SK-N-SH (cell line): ENCODE measurements at regions of chr2 and their contacts with region 1.

Region 1: DNA sequence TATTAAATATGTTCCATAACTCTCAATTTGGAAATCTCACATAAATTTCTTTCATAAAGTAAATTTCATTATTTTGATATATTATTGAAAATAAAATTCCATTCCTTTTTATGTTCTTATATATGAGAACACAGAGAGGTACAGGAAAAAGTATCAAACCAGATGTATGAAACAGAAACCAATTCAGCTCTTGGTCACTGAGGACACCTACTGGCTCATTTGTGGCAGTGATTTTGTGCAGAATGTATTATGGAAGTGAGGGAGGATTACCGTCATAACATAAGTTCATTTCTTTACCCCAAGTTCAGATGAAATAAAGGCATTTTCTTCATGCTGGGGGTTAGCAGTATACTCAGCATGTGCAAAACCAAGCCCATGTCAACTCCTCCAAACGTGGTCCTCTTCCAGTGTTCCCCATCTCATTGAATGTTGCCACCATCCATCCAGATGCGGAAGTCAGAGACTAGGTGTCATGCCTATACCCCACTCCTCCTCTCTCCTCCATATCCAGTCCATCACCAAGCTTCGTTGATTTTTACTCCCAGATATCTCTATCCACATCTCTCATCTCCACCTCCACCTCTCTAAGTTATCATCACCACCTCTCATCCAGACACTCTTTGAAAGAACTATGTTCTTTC is 41.7 kb upstream of the MALL start:
- DNase-seq: peak; percentile 48
- H3K4me3 ChIP-seq: no peak overlapping the region
- H3K27ac ChIP-seq: peak overlapping the region in 1 of 2 experiments; percentile 75; a peak in 2 of 4 replicates
- H3K4me1 ChIP-seq: no peaks in the 10 kb centered on the region
- H3K27me3 ChIP-seq: no peaks in the 10 kb centered on the region
- CTCF ChIP-seq: peak; percentile 84
- EP300 ChIP-seq: no peak
- RAD21 ChIP-seq: peak; percentile 89

Region 2: GRCh38 chr2:110167326-110168000 is 10.2 kb after region 1 on chr2:
- CTCF ChIA-PET with region 1: interaction called, 32 read pairs
- POLR2A ChIA-PET with region 1: no interaction called
- DNase-seq: no peak
- H3K4me3 ChIP-seq: no peak overlapping the region
- H3K27ac ChIP-seq: no peak overlapping the region
- H3K4me1 ChIP-seq: peaks cover 0 to 5% of the 10 kb centered on the region in 2 experiments; a peak in 2 of 4 replicates
- H3K27me3 ChIP-seq: no peaks in the 10 kb centered on the region
- CTCF ChIP-seq: no peak
- EP300 ChIP-seq: no peak
- RAD21 ChIP-seq: no peak

Region 3: GRCh38 chr2:110180036-110180435 is 22.8 kb after region 1 on chr2:
- CTCF ChIA-PET with region 1: interaction called, 17 read pairs
- POLR2A ChIA-PET with region 1: no interaction called
- DNase-seq: no peak
- H3K4me3 ChIP-seq: no peak overlapping the region
- H3K27ac ChIP-seq: no peak overlapping the region
- H3K4me1 ChIP-seq: no peaks in the 10 kb centered on the region
- H3K27me3 ChIP-seq: no peaks in the 10 kb centered on the region
- CTCF ChIP-seq: no peak
- EP300 ChIP-seq: no peak
- RAD21 ChIP-seq: no peak